Activated CD4-positive, alpha-beta memory T cell treated with anti-CD3 and anti-CD28 coated beads for 36 hours (primary cell): ENCODE measurements at regions of chr19 and their contacts with region 1.

Region 1: GRCh38 chr19:16041299-16041990 is 34.9 kb upstream of the TPM4 start:
- DNase-seq: peak; percentile 84
- H3K4me3 Mint-ChIP-seq: peak overlapping the region; percentile 32
- H3K27ac Mint-ChIP-seq: no peak overlapping the region
- H3K4me1 Mint-ChIP-seq: peaks cover 12% of the 10 kb centered on the region
- H3K27me3 Mint-ChIP-seq: peaks cover 1% of the 10 kb centered on the region

Region 2: DNA sequence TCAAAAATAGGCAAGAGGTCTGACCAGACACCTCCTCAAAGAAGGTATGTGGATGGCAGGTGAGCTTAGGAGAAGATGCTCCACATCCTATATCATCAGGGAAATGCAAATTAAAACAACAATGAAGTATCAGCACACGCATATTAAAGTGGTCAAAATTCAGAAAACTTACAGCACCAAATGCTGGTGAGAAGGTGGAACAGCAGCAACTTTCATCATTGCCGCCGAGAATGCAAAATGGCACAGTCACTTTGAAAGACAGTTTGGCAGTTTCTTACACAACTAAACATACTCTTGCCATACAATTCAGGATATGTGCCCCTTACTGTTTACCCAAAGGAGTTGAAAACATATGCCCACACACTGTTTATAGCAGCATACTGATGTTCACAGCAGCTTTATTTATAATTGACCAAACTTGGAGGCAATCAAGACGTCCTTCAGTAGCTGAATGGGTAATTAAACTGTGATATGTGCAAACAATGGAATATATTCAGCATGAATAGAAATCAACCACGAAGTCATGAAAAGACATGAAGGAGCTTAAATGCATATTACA is 70.1 kb before region 1 on chr19:
- CTCF ChIA-PET with region 1: no interaction called
- POLR2A ChIA-PET with region 1: no interaction called
- intact Hi-C with region 1: no loop called
- DNase-seq: no peak
- H3K4me3 Mint-ChIP-seq: no peak overlapping the region
- H3K27ac Mint-ChIP-seq: no peak overlapping the region
- H3K4me1 Mint-ChIP-seq: no peaks in the 10 kb centered on the region
- H3K27me3 Mint-ChIP-seq: peaks cover 11% of the 10 kb centered on the region

Region 3: DNA sequence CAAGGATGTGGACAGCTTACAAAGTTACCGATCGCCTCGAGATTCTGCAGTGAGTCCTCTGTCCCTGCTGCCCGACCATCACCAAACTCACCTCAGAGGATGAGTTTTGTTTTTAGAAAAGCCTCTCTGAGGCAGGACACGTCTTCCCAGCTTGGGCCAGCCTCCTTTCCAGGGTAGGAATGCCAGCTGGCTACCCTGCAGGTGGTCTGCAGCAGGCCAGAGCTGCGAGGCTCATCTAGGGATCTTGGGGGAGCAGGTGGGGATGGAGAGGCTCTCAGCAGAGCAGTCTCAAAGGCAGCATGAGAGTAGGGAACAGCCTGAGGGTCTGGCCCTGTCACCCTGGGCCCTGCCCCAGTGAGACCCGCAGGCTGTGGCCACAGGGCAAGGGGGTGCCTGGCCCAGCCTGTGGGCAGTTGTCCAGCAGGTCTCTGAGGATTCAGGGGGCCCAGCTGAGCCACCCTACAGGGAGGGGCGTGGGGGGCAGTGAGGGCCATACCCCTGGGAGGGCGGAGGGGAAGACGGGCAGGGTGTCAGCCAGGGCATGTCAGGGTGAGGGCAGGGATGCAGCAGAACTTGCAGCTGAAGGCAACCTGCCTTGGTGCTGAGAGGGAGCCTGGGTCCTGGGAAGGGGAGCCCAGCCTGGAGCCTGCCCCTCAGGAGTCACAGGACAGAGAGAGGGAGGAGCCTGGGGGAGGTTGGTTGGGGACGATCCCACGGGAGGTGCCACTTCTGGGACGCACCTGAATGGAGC is 22.5 kb before region 1 on chr19:
- CTCF ChIA-PET with region 1: no interaction called
- POLR2A ChIA-PET with region 1: no interaction called
- intact Hi-C with region 1: no loop called
- DNase-seq: no peak
- H3K4me3 Mint-ChIP-seq: no peak overlapping the region
- H3K27ac Mint-ChIP-seq: no peak overlapping the region
- H3K4me1 Mint-ChIP-seq: no peaks in the 10 kb centered on the region
- H3K27me3 Mint-ChIP-seq: no peaks in the 10 kb centered on the region

Region 4: GRCh38 chr19:16062789-16063188 is 21.3 kb after region 1 on chr19:
- CTCF ChIA-PET with region 1: interaction called, 43 read pairs
- POLR2A ChIA-PET with region 1: no interaction called
- intact Hi-C with region 1: no loop called
- DNase-seq: peak; percentile 80
- H3K4me3 Mint-ChIP-seq: no peak overlapping the region
- H3K27ac Mint-ChIP-seq: peak overlapping the region; percentile 38
- H3K4me1 Mint-ChIP-seq: peaks cover 30% of the 10 kb centered on the region
- H3K27me3 Mint-ChIP-seq: peaks cover 2% of the 10 kb centered on the region

Region 5: DNA sequence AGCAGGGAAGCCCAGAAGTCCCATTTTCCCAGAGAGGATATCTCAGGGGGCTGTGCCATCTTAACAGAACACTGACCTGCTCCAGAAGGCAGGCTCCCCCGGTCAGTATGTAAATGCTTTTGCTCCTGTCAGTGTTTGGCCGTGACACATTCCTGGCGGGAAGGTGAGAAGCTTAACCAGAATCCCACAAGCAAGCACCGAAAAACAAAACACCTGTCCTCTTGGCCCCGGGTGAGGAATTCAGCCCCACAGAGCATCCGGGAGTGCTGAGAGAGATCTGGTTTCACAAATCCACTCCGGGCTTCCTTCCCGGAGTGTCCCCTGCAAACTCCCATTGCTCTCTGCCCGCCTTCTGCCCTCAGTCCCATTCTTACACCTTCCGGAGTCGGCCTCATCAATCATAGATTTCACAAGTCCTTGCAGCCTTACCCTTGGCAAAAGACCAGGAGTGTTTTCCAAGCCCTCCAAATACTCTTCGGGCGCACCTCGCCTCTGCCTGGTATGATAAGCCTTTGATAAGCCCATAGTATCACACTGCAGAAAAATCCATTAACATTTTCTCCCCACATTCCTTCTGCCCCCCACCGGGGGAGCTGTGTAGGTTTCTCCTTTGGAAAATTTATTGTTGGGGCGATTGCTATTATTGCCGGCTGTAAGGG is 47.0 kb after region 1 on chr19:
- CTCF ChIA-PET with region 1: interaction called, 11 read pairs
- POLR2A ChIA-PET with region 1: interaction called, 4 read pairs
- intact Hi-C with region 1: no loop called
- DNase-seq: no peak
- H3K4me3 Mint-ChIP-seq: no peak overlapping the region
- H3K27ac Mint-ChIP-seq: peak overlapping the region; percentile 56
- H3K4me1 Mint-ChIP-seq: peaks cover 51% of the 10 kb centered on the region
- H3K27me3 Mint-ChIP-seq: no peaks in the 10 kb centered on the region

Region 6: GRCh38 chr19:16111160-16111908 is 69.9 kb after region 1 on chr19 and contains the start of gene RAB8A:
- CTCF ChIA-PET with region 1: interaction called, 21 read pairs
- POLR2A ChIA-PET with region 1: interaction called, 4 read pairs
- intact Hi-C with region 1: no loop called
- DNase-seq: peak; percentile 99
- H3K4me3 Mint-ChIP-seq: peak within 1 kb of the TSS; percentile 98
- H3K27ac Mint-ChIP-seq: peak within 1 kb of the TSS; percentile 97
- H3K4me1 Mint-ChIP-seq: peaks cover 40% of the 10 kb centered on the region
- H3K27me3 Mint-ChIP-seq: no peaks in the 10 kb centered on the region
- total RNA-seq, gene RAB8A: 146 to 154 TPM

Region 7: DNA sequence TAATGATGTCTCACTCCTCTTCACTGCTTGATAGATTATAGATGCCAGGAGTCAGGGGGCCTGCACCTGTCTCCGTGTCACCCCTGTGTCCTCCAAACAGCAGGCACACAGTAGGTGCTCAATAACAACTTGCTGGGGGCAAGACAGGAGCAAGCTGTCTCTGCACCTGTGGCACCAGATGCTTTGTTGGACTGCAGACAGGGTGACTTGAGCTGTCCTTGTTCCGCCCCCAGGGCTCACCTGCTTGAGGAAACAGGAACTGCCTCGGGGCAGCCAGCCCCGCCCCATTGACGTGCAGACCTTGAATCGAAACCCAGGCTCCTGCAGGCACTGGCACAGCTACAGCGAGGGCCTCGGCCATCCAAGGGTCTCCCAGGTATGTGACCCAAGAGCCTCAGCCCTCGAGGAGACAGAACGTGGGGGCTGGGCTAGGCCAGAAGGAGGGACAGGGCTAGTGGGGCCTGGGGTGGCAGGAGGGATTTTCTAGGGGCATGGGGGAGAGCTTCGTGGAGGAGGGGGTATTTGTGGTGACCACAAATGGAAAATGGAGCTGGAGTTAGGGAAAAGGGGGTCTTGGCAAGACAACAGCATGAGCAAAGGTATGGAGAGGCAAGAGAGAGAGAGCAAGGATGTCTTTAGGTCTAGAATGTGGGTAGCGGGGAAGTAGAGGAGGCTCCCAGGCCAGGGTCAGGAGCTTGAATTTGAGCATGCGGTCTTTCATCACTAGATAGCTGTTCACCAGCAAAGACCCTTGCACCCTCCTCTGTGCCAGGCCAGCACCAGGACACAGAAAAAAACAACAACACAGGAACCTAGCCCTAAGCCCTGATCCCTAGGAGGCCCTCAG is 102.2 kb after region 1 on chr19 and contains the start of gene HSH2D:
- CTCF ChIA-PET with region 1: interaction called, 19 read pairs
- POLR2A ChIA-PET with region 1: no interaction called
- intact Hi-C with region 1: no loop called
- DNase-seq: peak; percentile 90
- H3K4me3 Mint-ChIP-seq: peak within 1 kb of the TSS; percentile 92
- H3K27ac Mint-ChIP-seq: peak within 1 kb of the TSS; percentile 92
- H3K4me1 Mint-ChIP-seq: peaks cover 26% of the 10 kb centered on the region
- H3K27me3 Mint-ChIP-seq: no peaks in the 10 kb centered on the region
- total RNA-seq, gene HSH2D: 23.6 to 26.1 TPM

Region 8: DNA sequence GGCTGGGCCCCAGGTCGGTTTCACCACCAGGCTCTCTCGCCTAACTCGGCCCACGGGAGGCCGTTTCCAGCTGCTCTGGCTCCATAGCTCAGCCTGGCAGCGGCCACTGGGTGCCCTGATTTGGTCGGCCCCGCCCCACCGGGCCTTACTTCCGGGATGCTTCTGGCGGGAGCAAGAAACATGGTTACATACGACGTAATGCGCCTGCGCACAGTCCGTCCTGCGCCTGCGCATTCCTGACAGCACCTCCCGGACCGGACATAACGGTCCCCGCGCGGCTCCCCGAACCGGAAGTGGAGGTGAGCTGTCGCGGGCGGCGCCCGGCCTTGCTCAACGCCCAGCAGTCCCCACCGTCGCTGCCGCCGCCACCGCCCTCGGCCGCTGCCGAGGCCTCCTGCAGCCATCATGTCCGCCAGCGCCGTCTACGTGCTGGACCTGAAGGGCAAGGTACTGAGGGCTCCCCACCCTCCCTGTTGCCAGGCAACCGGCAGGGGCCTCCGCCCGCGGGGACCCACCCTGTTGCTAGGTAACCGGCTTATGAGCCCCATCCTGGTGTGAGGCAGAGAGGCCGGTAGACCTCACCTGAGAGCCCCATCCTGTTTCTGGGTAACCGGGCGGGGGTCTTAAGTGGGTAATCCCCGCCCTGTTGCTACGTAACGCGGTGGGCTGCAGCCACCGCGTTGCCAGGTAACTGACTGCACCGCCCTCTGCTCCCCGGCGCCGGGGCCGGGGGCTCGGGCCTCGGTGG is 156.4 kb after region 1 on chr19 and contains the start of gene AP1M1:
- CTCF ChIA-PET with region 1: interaction called, 12 read pairs
- POLR2A ChIA-PET with region 1: interaction called, 3 read pairs
- intact Hi-C with region 1: no loop called
- DNase-seq: peak; percentile 99
- H3K4me3 Mint-ChIP-seq: peak within 1 kb of the TSS; percentile 97
- H3K27ac Mint-ChIP-seq: peak within 1 kb of the TSS; percentile 92
- H3K4me1 Mint-ChIP-seq: peaks cover 41% of the 10 kb centered on the region
- H3K27me3 Mint-ChIP-seq: no peaks in the 10 kb centered on the region
- total RNA-seq, gene AP1M1: 100 to 113 TPM